MCF 10A (cell line): ENCODE measurements at regions of chr11 and their contacts with region 1.

Region 1: GRCh38 chr11:65180877-65181568 is 705 bp upstream of the CAPN1 start:
- DNase-seq: peak; percentile 57
- H3K4me3 Mint-ChIP-seq: peak overlapping the region; percentile 85
- H3K27ac Mint-ChIP-seq: peak overlapping the region; percentile 88
- H3K4me1 Mint-ChIP-seq: peaks cover 3% of the 10 kb centered on the region
- H3K27me3 Mint-ChIP-seq: no peaks in the 10 kb centered on the region
- CTCF ChIP-seq: peak; percentile 33

Region 2: GRCh38 chr11:65111744-65112414 is 69.1 kb before region 1 on chr11 and contains the start of gene TM7SF2:
- CTCF ChIA-PET with region 1: interaction called, 3 read pairs
- POLR2A ChIA-PET with region 1: interaction called, 122 read pairs
- intact Hi-C with region 1: no loop called
- DNase-seq: peak; percentile 96
- H3K4me3 Mint-ChIP-seq: peak within 1 kb of the TSS; percentile 93
- H3K27ac Mint-ChIP-seq: peak within 1 kb of the TSS; percentile 94
- H3K4me1 Mint-ChIP-seq: peaks cover 11% of the 10 kb centered on the region
- H3K27me3 Mint-ChIP-seq: no peaks in the 10 kb centered on the region
- CTCF ChIP-seq: no peak
- total RNA-seq, gene TM7SF2: 8.5 and 14.0 TPM in 2 replicates

Region 3: GRCh38 chr11:65117216-65118096 is 63.6 kb before region 1 on chr11 and contains the start of gene ZNHIT2:
- CTCF ChIA-PET with region 1: interaction called, 4 read pairs
- POLR2A ChIA-PET with region 1: interaction called, 122 read pairs
- intact Hi-C with region 1: no loop called
- DNase-seq: peak; percentile 99
- H3K4me3 Mint-ChIP-seq: peak within 1 kb of the TSS; percentile 82
- H3K27ac Mint-ChIP-seq: peak within 1 kb of the TSS; percentile 88
- H3K4me1 Mint-ChIP-seq: peaks cover 16% of the 10 kb centered on the region
- H3K27me3 Mint-ChIP-seq: no peaks in the 10 kb centered on the region
- CTCF ChIP-seq: peak; percentile 84
- total RNA-seq, gene ZNHIT2: 22.0 and 23.6 TPM in 2 replicates

Region 4: DNA sequence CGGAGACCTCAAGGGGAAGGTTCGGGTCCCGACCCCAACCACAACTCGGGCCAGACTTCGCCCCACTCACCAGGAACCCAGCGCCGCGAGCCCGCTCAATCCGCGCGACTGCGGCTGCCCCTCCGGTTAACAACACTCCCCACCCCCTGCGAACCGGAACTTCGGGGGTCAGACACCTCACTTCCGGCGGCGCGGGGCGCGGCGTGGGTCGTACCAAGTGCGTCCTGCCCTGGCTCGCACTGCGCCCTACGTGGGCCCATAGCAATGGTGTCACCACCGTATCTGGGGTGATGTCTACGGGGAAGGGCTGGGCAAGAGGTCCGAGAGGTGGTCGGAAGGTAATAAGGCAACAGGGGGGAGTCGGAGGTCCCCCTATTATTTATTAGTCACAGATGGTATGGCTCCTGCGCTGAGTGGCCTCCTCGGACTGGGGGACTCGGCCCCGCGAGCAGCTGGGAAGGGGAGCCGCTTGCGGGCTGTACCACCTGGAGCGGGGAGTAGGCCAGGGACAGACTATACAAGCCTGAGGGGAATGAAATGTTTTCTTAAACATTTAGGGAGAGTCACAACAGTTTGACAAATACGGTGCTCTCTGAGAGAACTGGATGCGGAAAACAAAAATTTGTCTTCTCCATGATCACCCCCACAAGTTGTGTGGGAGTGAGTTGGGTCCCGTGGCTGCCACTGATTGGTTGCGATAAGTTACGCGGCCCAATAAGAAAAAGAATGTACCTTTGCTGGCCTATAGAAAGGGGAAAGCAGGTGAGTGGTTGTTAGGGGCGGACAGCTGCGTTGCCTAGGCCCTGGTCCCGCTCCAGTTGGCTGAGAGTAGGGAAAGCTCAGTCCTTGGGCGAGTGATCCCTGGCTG is 46.4 kb before region 1 on chr11 and contains the start of gene SYVN1:
- CTCF ChIA-PET with region 1: interaction called, 5 read pairs
- POLR2A ChIA-PET with region 1: interaction called, 157 read pairs
- intact Hi-C with region 1: loop called (anchors 2 kb)
- DNase-seq: peak; percentile 98
- H3K4me3 Mint-ChIP-seq: peak within 1 kb of the TSS; percentile 99
- H3K27ac Mint-ChIP-seq: peak within 1 kb of the TSS; percentile 100
- H3K4me1 Mint-ChIP-seq: peaks cover 28% of the 10 kb centered on the region
- H3K27me3 Mint-ChIP-seq: no peaks in the 10 kb centered on the region
- CTCF ChIP-seq: no peak
- total RNA-seq, gene SYVN1: 74.9 and 99.8 TPM in 2 replicates

Region 5: DNA sequence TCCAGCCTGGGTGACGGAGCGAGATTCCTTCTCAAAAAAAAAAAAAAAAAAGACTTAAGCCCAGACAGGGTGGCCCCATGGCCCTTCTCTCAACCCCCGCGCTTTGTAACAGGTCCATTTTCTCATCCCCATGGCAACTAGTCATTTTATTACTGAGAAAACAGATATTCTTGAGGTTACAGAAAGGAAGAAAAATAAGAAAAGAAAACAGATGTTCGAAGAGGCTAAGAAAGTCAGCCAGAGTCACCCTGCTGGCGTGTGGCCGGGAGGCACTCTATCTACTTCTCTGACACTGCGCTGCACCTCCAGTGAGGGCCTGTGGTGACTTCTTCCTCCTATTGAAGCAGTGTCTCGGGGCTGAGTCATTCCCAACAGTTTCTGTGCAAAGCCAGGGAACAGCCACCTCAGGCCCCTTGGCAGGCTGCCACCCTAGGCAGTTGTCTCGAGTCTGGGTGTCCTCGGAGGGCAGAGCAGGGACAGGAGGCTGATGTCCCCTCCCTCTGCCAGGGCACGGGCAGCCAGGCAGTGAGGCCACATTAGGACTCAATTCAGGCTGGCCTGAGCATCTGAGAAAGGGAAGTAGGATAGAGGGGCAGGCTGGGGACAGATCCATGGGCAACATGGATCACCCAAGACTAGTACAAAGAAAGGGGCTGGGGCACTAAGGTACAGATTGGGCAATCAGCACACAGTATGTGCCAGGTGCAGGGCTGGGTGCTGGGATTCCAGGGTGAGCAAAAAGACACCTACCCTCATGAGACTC is 30.3 kb before region 1 on chr11:
- CTCF ChIA-PET with region 1: interaction called, 3 read pairs
- POLR2A ChIA-PET with region 1: interaction called, 10 read pairs
- intact Hi-C with region 1: no loop called
- DNase-seq: peak; percentile 96
- H3K4me3 Mint-ChIP-seq: peak overlapping the region; percentile 45
- H3K27ac Mint-ChIP-seq: peak overlapping the region; percentile 78
- H3K4me1 Mint-ChIP-seq: peaks cover 22% of the 10 kb centered on the region
- H3K27me3 Mint-ChIP-seq: no peaks in the 10 kb centered on the region
- CTCF ChIP-seq: no peak

Region 6: DNA sequence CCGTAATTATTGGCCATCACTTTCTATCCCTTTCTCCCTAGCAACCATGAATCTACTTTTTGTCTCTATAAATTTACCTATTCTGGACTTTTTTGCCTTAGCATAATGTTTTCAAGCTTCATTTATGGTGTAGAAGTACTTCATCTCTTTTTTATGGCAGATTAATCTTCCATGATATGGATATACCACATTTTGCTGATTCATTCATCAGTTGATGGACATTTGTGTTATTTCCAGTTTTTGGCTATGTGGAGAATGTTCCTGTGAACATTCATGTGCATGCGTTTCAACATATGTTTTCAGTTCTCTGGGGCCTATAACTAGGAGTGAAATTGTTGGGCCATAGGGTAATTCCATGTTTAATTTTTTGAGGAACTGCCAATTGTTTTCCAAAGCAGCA is 13.5 kb after region 1 on chr11:
- CTCF ChIA-PET with region 1: interaction called, 5 read pairs
- POLR2A ChIA-PET with region 1: interaction called, 13 read pairs
- intact Hi-C with region 1: no loop called
- DNase-seq: no peak
- H3K4me3 Mint-ChIP-seq: no peak overlapping the region
- H3K27ac Mint-ChIP-seq: no peak overlapping the region
- H3K4me1 Mint-ChIP-seq: peaks cover 7% of the 10 kb centered on the region
- H3K27me3 Mint-ChIP-seq: no peaks in the 10 kb centered on the region
- CTCF ChIP-seq: no peak

Region 7: DNA sequence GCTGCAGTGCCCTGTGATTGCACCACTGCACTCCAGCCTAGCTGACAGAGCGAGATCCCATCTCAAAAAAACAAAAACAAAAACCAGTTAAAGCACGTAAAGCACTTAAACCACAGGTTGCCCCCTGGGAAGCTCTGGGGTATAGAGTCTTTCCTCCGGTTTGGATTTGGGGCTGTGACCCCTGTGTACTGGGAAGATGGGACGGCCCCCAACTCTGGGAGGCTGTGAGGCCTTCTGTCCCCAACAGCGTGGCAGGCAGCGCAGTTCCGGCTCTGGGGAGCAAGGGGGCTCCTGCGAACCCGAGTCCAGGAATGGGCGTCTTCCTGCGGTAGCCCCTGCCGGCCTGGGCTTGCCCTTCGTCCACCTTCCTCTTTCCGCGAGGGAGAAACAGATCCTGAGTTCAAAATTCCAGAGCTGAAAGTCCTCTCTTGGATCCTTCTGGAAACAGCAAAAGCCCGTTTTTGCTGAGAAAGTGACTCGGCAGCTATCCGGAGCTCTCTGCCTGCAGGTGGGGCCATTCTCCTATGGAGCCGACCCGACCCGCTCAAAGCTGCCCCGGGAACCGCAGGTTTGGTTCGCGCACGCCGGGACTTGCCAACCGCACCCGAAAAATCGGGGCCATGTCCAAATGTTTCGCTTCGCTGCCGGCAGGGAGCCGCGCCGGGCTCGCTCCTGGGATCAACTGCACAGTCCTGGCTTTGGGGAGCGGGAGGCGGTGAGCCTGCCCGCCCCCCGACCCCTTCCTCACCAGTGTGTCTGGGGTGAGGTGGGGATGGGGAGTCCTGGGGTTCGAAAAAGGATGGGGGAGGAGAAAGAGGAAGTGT is 44.5 kb after region 1 on chr11:
- CTCF ChIA-PET with region 1: interaction called, 3 read pairs
- POLR2A ChIA-PET with region 1: interaction called, 11 read pairs
- intact Hi-C with region 1: no loop called
- DNase-seq: peak; percentile 72
- H3K4me3 Mint-ChIP-seq: peak overlapping the region; percentile 71
- H3K27ac Mint-ChIP-seq: peak overlapping the region; percentile 35
- H3K4me1 Mint-ChIP-seq: peaks cover 5% of the 10 kb centered on the region
- H3K27me3 Mint-ChIP-seq: no peaks in the 10 kb centered on the region
- CTCF ChIP-seq: peak; percentile 36